ENCODE measurements at regions of chr19 and their contacts with region 1.

Region 1: DNA sequence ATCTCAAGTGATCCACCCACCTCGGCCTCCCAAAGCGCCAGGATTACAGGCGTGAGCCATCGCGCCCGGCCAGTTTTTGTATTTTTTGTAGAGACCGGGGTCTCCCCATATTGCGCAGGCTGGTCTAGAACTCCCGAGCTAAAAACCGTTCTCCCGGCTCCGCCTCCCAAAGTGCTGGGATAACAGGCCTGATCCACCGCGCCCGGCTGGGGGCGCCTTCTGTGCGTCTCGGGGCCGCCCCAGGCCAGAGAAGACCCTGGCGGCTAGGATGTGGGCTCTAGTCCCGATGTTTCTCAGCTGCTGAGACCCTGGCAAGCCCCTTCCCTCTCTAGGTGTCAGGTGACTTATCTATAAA is 3.6 kb downstream of the ARHGAP45 start:
- DNase-seq: peak; percentile 77
- ATAC-seq: peak; percentile 49
- H3K4me3 Mint-ChIP-seq: peak overlapping the region; percentile 52
- H3K27ac Mint-ChIP-seq: no peak overlapping the region
- H3K4me1 Mint-ChIP-seq: peaks cover 11% of the 10 kb centered on the region
- H3K27me3 Mint-ChIP-seq: peaks cover 29% of the 10 kb centered on the region
- CTCF ChIP-seq: no peak

Region 2: GRCh38 chr19:869245-870177 is 201.0 kb before region 1 on chr19:
- CTCF ChIA-PET with region 1: no interaction called
- POLR2A ChIA-PET with region 1: no interaction called
- DNase-seq: no peak
- ATAC-seq: no peak
- H3K4me3 Mint-ChIP-seq: no peak overlapping the region
- H3K27ac Mint-ChIP-seq: no peak overlapping the region; the same call in 1 of the 2 replicates
- H3K4me1 Mint-ChIP-seq: peaks cover 5% of the 10 kb centered on the region
- H3K27me3 Mint-ChIP-seq: no peaks in the 10 kb centered on the region
- CTCF ChIP-seq: no peak

Region 3: GRCh38 chr19:925526-926322 is 144.8 kb before region 1 on chr19 and contains the start of gene ARID3A:
- CTCF ChIA-PET with region 1: no interaction called
- POLR2A ChIA-PET with region 1: no interaction called
- DNase-seq: peak; percentile 85
- ATAC-seq: no peak
- H3K4me3 Mint-ChIP-seq: peak within 1 kb of the TSS; percentile 75
- H3K27ac Mint-ChIP-seq: no peak within 1 kb of the TSS
- H3K4me1 Mint-ChIP-seq: peaks cover 17% of the 10 kb centered on the region
- H3K27me3 Mint-ChIP-seq: peaks cover 18% of the 10 kb centered on the region
- CTCF ChIP-seq: no peak
- total RNA-seq, gene ARID3A: 102 to 116 TPM (median 113 TPM) in 3 replicates

Region 4: DNA sequence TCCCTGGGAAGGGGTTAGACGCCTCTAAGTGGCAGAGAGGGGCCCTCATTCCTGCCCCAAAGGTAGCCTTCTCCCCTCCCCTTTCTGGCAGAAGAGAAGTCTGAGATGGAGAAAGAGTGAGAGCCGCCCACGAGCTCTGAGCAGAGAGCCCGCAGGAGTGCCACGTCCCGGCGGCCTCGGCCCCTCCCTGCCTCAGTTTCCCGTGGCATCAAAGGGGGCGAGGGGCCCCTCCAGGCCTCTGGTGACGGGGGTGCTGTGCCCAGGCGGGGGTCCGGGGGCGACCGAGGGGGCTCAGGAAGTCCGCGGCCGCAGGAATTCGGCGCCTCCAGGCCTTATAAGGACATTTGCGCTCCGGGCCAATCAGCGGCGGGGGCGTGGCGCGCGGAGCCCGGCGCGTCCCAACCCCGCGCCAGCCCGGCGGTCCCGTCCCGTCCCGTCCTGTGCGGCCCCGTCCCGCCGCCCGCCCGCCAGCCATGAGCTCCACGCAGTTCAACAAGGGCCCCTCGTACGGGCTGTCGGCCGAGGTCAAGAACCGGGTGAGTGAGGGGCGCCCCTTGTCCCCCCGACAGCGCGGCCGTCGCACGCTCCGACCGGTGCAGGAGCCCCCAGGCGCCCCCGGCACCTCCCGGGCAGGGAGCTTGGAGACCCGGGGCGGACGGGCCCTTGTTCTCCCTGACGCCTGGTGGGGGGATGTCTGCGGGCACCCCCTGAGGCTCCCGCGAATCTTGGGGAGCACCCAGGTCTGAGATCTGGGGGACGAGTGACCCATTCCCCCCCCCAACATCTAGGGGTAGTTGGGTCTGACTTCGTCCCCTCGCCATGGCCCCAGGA is 44.1 kb before region 1 on chr19 and contains the start of gene CNN2:
- CTCF ChIA-PET with region 1: interaction called, 33 read pairs
- POLR2A ChIA-PET with region 1: interaction called, 7 read pairs
- DNase-seq: peak; percentile 84
- ATAC-seq: peak; percentile 69
- H3K4me3 Mint-ChIP-seq: peak within 1 kb of the TSS; percentile 92
- H3K27ac Mint-ChIP-seq: peak within 1 kb of the TSS; percentile 94
- H3K4me1 Mint-ChIP-seq: peaks cover 3% of the 10 kb centered on the region
- H3K27me3 Mint-ChIP-seq: no peaks in the 10 kb centered on the region
- CTCF ChIP-seq: no peak
- total RNA-seq, gene CNN2: 387 to 391 TPM (median 390 TPM) in 3 replicates

Region 5: DNA sequence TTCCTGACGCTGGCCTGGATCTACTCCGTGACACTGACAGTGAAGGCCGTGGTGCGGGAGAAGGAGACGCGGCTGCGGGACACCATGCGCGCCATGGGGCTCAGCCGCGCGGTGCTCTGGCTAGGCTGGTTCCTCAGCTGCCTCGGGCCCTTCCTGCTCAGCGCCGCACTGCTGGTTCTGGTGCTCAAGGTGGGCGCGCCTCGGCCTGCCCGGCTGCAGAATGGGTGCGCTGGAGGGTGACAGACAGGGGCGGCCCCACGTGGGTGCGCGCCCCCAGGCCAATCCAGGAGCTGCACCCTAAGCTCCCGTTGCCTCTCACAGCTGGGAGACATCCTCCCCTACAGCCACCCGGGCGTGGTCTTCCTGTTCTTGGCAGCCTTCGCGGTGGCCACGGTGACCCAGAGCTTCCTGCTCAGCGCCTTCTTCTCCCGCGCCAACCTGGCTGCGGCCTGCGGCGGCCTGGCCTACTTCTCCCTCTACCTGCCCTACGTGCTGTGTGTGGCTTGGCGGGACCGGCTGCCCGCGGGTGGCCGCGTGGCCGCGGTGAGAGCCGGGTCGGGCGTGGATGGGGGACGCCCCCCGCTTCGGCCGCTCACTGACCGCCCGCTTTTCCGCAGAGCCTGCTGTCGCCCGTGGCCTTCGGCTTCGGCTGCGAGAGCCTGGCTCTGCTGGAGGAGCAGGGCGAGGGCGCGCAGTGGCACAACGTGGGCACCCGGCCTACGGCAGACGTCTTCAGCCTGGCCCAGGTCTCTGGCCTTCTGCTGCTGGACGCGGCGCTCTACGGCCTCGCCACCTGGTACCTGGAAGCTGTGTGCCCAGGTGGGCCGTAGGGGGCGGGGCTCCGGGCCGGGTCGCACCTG is 23.5 kb before region 1 on chr19:
- CTCF ChIA-PET with region 1: interaction called, 18 read pairs
- POLR2A ChIA-PET with region 1: interaction called, 3 read pairs
- DNase-seq: no peak
- ATAC-seq: no peak
- H3K4me3 Mint-ChIP-seq: no peak overlapping the region
- H3K27ac Mint-ChIP-seq: no peak overlapping the region
- H3K4me1 Mint-ChIP-seq: no peaks in the 10 kb centered on the region
- H3K27me3 Mint-ChIP-seq: no peaks in the 10 kb centered on the region
- CTCF ChIP-seq: no peak